ENCODE measurements at regions of chr6 and their contacts with region 1.

Region 1: GRCh38 chr6:159174263-159174969 is 5.2 kb downstream of the FNDC1 start:
- DNase-seq: peak in 1 of 2 donors; percentile 82
- H3K4me3 ChIP-seq: peak overlapping the region in 1 of 2 donors; percentile 28
- H3K27ac ChIP-seq: no peak overlapping the region
- H3K4me1 ChIP-seq: peaks cover 0 to 7% of the 10 kb centered on the region in 2 donors
- H3K27me3 ChIP-seq: no peaks in the 10 kb centered on the region
- CTCF ChIP-seq: peak; percentile 75 to 99 (median 95)

Region 2: DNA sequence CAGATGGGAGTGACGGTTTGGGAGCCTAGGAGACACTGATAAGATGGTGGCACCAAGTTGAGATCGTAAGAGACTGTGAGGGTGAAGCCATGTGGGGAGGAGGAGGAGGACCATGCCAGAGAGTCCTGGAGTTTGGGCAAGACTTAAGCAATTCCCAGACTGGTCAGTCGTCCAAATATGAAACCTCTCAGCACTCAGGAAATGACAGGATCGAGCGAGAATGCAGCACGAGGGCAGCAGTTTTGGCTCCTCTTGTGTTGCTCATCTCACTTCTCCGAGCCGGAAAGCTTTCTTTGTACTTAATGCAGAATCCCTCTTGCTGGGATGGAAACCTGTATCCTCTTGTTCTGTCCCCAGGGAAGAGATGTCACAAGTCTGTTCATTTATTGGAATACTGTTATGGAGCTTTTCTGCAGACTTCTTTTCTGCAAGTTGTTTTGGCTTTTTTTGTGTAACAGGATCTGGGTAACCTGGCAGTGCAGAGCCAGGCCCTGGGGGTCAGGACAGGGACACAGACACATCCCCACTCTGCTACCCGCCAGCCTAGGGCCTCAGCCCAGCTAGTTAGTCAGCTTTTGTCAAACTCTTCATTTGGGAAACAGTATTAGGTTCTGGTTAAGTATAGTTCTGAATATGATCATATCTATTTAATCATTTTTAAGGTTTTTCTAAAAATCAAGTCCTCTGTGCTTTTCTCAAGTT is 29.0 kb after region 1 on chr6:
- intact Hi-C with region 1: loop called (anchors 2 kb)
- DNase-seq: peak; percentile 25 to 87
- H3K4me3 ChIP-seq: no peak overlapping the region
- H3K27ac ChIP-seq: peak overlapping the region; percentile 80 to 83
- H3K4me1 ChIP-seq: peaks cover 3 to 8% of the 10 kb centered on the region in 2 donors
- H3K27me3 ChIP-seq: no peaks in the 10 kb centered on the region
- CTCF ChIP-seq: no peak

Region 3: GRCh38 chr6:159305804-159306537 is 131.6 kb after region 1 on chr6:
- intact Hi-C with region 1: loop called (anchors 5 kb)
- DNase-seq: no peak
- H3K4me3 ChIP-seq: no peak overlapping the region
- H3K27ac ChIP-seq: no peak overlapping the region
- H3K4me1 ChIP-seq: peaks cover 0 to 16% of the 10 kb centered on the region in 2 donors
- H3K27me3 ChIP-seq: no peaks in the 10 kb centered on the region
- CTCF ChIP-seq: no peak

Region 4: DNA sequence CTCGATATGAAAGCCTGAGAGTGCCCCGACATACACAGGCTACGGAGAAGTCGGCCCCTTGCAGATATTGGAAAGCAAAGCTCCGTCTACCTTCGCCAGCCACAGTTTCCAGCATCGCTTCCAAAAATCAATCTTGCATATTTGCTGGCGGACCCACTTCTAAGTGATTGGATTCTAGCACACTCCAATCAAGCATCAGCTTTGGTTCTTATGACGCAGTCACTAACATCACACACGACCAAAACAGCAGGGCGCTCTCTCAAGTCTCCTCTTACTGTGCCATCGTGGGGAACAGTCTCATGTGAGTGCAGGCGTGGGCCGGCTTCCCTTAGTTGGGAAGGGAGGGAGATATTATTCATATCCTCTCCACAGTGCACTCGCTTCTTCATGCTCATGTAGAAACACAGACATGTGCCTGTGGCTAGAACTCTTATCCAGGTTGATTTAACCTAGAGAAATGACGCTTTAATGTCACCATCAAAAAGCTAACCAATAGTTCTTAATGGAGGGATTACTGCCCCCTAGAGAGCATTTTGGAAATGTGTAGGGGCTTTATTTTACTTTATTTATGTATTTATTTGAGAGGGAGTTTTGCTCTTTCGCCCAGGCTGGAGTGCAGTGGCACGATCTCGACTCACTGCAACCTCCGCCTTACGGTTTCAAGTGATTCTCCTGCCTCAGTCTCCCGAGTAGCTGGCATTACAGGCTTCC is 288.9 kb after region 1 on chr6:
- intact Hi-C with region 1: loop called (anchors 1 kb)
- DNase-seq: no peak
- H3K4me3 ChIP-seq: no peak overlapping the region
- H3K27ac ChIP-seq: no peak overlapping the region
- H3K4me1 ChIP-seq: no peaks in the 10 kb centered on the region
- H3K27me3 ChIP-seq: no peaks in the 10 kb centered on the region
- CTCF ChIP-seq: peak in 1 of 3 experiments; percentile 44

Region 5: DNA sequence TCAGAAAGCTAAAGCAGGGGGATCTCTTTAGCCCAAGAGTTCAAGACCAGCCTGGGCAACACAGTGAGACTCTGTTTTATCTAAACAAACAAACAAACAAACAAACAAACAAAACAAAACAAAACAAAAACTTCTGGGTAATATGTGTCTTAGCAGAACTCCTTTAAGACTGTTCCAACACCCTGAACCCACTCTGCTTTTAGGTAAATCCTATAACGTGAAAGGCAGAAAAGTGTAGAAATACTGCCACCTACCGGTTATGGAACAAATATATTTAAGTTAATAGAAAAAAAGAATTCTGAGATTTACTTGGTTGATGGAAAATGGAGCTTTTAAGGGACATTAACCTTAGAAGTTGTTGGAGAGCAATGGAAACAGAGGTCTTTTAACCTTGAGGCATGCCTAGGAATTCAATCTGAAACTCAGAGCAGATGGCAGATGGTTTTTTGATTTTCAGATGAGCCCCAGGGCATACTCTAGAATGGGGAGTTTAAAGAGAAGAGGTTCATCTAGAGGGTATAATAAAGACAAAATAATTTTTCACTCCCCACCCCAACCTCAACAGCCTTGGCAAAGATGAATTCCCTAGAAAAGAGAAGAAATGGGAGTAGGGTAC is 480.2 kb after region 1 on chr6:
- intact Hi-C with region 1: loop called (anchors 1 kb)
- DNase-seq: no peak
- H3K4me3 ChIP-seq: no peak overlapping the region
- H3K27ac ChIP-seq: no peak overlapping the region
- H3K4me1 ChIP-seq: no peaks in the 10 kb centered on the region
- H3K27me3 ChIP-seq: no peaks in the 10 kb centered on the region
- CTCF ChIP-seq: peak; percentile 39 to 73 (median 56)